PC-9 (cell line): ENCODE measurements at regions of chr4 and their contacts with region 1.

Region 1: DNA sequence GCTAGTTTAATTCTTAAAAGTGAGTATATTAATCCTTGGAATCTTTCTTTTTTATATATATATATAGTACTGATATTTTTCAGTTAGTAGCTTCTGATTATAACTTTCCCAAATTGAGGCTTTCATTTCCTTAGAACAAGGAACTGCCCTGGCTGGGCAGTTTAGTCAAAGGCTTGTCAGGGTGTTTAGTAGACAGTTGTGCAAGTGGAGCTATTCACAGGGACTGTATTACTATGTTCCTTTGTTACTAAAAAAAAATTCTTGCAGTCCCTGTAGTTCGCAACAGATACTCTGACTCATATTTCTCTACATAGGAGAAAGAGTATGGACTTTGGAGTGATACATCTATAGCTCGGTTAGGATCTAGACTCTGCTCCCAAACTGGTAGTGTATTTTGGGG is 20.8 kb downstream of the USO1 start:
- DNase-seq: peak in 1 of 2 experiments; percentile 51
- H3K4me3 ChIP-seq: no peak overlapping the region
- H3K27ac ChIP-seq: no peak overlapping the region
- H3K4me1 ChIP-seq: no peaks in the 10 kb centered on the region
- H3K27me3 ChIP-seq: no peaks in the 10 kb centered on the region
- CTCF ChIP-seq: no peak

Region 2: DNA sequence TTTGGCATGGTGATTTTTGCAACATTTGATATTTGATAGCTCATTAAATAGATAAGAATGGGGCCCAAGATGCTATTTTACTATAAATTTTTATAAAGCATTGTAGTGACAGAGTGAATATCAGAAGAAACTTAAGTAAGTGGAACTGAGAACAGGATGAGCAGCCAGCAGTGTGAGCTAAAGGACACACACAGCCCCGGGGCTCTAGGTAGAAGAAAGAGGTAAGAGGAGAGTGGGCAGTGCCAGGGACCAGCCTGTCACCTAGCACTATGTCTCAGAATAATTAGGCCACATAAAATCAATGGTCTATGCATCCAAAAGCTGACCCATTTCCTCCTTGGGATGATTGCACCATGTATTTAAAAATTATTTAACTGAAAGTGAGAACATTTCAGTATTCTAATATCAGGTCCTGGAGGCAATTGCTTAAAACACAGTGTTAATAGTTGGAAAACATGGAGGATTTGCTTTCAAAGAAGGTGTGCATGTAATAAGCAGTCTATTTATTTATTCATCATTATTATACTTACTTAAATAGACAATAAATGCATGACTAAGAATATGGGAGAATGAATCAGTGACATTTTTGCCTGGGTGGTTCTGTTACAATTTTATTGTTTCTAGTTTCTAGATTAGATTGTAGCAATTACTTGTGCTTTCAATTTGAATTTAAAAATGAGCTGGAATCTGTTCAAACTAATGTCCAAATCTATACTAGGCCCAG is 1154.8 kb before region 1 on chr4:
- CTCF ChIA-PET with region 1: no interaction called
- POLR2A ChIA-PET with region 1: interaction called, 11 read pairs
- intact Hi-C with region 1: no loop called
- DNase-seq: no peak
- H3K4me3 ChIP-seq: no peak overlapping the region
- H3K27ac ChIP-seq: no peak overlapping the region
- H3K4me1 ChIP-seq: no peaks in the 10 kb centered on the region; the same call in 1 of the 2 replicates
- H3K27me3 ChIP-seq: no peaks in the 10 kb centered on the region
- CTCF ChIP-seq: no peak

Region 3: DNA sequence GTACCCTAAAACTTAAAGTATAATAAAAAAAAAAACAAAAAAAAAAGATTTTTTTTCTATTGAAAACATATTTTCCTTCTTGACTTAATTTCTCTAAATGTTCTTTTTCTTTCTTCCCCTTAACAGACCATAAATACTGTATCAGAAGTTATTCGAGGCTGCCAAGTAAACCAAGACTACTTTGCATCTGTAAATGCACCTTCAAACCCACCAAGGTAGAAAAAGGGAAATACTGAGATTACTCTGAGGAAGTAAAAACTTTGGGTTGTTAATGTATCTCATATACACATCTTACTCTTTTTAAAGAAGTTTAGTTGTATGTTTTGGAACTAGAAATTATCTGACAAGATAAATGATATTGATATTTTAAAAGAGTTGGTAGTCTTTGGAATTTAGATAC is 44.9 kb after region 1 on chr4:
- CTCF ChIA-PET with region 1: no interaction called
- POLR2A ChIA-PET with region 1: no interaction called
- intact Hi-C with region 1: no loop called
- DNase-seq: no peak
- H3K4me3 ChIP-seq: no peak overlapping the region
- H3K27ac ChIP-seq: no peak overlapping the region
- H3K4me1 ChIP-seq: no peaks in the 10 kb centered on the region
- H3K27me3 ChIP-seq: no peaks in the 10 kb centered on the region
- CTCF ChIP-seq: no peak

Region 4: GRCh38 chr4:76125816-76126215 is 380.7 kb after region 1 on chr4:
- CTCF ChIA-PET with region 1: no interaction called
- POLR2A ChIA-PET with region 1: no interaction called
- intact Hi-C with region 1: no loop called
- DNase-seq: no peak
- H3K4me3 ChIP-seq: no peak overlapping the region
- H3K27ac ChIP-seq: no peak overlapping the region
- H3K4me1 ChIP-seq: no peaks in the 10 kb centered on the region
- H3K27me3 ChIP-seq: no peaks in the 10 kb centered on the region
- CTCF ChIP-seq: no peak